IMR-90 (cell line): ENCODE measurements at regions of chr3 and their contacts with region 1.

Region 1: GRCh38 chr3:183317886-183318865 is 65.1 kb downstream of the B3GNT5 start:
- DNase-seq: peak; percentile 24
- ATAC-seq: 0 out of 2 replicates have a peak, but pooled peaks have one; percentile 24
- H3K4me3 ChIP-seq: no peak overlapping the region
- H3K27ac ChIP-seq: no peak overlapping the region
- H3K4me1 ChIP-seq: peaks cover 3% of the 10 kb centered on the region; the same call in 1 of the 2 replicates
- H3K27me3 ChIP-seq: peaks cover 5% of the 10 kb centered on the region
- CTCF ChIP-seq: no peak
- POLR2A ChIP-seq: no peak
- RAD21 ChIP-seq: no peak

Region 2: GRCh38 chr3:182325213-182325941 is 992.8 kb before region 1 on chr3:
- CTCF ChIA-PET with region 1: no interaction called
- POLR2A ChIA-PET with region 1: no interaction called
- dilution Hi-C with region 1: no loop called
- in situ Hi-C with region 1: no loop called
- intact Hi-C with region 1: no loop called
- DNase-seq: no peak
- ATAC-seq: no peak
- H3K4me3 ChIP-seq: no peak overlapping the region
- H3K27ac ChIP-seq: no peak overlapping the region
- H3K4me1 ChIP-seq: no peaks in the 10 kb centered on the region
- H3K27me3 ChIP-seq: no peaks in the 10 kb centered on the region
- CTCF ChIP-seq: no peak
- POLR2A ChIP-seq: no peak
- RAD21 ChIP-seq: no peak

Region 3: GRCh38 chr3:183158551-183159006 is 159.6 kb before region 1 on chr3:
- CTCF ChIA-PET with region 1: no interaction called
- POLR2A ChIA-PET with region 1: no interaction called
- dilution Hi-C with region 1: no loop called
- in situ Hi-C with region 1: no loop called
- intact Hi-C with region 1: no loop called
- DNase-seq: peak; percentile 68
- ATAC-seq: no peak
- H3K4me3 ChIP-seq: no peak overlapping the region
- H3K27ac ChIP-seq: no peak overlapping the region
- H3K4me1 ChIP-seq: no peaks in the 10 kb centered on the region
- H3K27me3 ChIP-seq: peaks cover 36% of the 10 kb centered on the region
- CTCF ChIP-seq: no peak
- POLR2A ChIP-seq: no peak
- RAD21 ChIP-seq: no peak

Region 4: GRCh38 chr3:183349421-183350157 is 31.4 kb after region 1 on chr3:
- CTCF ChIA-PET with region 1: interaction called, 13 read pairs
- POLR2A ChIA-PET with region 1: no interaction called
- dilution Hi-C with region 1: no loop called
- in situ Hi-C with region 1: no loop called
- intact Hi-C with region 1: no loop called
- DNase-seq: no peak
- ATAC-seq: no peak
- H3K4me3 ChIP-seq: no peak overlapping the region
- H3K27ac ChIP-seq: no peak overlapping the region
- H3K4me1 ChIP-seq: no peaks in the 10 kb centered on the region
- H3K27me3 ChIP-seq: peaks cover 8% of the 10 kb centered on the region; the same call in 1 of the 2 replicates
- CTCF ChIP-seq: no peak
- POLR2A ChIP-seq: no peak
- RAD21 ChIP-seq: no peak

Region 5: DNA sequence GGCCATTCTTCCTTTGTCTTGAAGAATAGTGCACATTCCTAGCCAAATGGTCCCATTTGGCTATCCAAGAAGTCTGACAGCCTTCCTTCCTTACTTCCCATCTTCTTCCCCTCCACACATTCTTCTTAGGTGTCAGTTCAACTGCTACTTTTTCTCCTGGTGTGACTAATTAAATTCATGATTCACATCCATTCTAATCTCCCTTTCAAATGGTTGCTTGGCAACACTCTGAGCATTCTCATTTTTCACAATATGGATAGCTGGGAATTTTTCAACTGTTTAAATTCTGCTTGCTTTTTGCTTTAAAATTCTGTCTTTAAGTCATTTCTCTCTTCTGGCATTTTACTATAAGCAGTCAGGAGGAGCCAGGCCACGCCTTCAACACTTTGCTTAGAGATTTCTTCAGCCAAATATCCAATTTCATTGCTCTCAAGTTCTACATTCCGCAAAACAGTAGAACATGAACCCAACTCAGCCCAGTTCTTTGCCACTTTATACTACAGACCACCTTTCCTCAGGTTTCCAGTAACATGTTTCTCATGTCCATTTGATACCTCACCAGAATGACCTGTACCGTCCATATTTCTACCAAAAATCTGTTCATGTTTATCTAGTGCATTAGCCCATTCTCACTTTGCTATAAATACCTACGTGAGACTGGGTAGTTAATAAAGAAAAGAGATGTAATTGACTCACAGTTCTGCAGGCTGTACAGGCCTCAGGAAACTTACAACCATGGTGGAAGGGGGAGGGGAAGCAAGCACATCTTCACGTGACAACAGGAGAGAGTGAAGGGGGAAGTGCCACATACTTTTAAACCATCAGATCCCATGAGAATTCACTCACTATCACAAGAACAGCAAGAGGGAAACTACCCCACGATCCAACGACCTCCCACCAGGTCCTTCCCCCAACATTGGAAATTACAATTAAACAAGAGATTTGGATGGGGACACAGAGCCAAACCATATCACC is 142.2 kb after region 1 on chr3:
- CTCF ChIA-PET with region 1: no interaction called
- POLR2A ChIA-PET with region 1: no interaction called
- dilution Hi-C with region 1: no loop called
- in situ Hi-C with region 1: no loop called
- intact Hi-C with region 1: no loop called
- DNase-seq: no peak
- ATAC-seq: no peak
- H3K4me3 ChIP-seq: no peak overlapping the region
- H3K27ac ChIP-seq: no peak overlapping the region
- H3K4me1 ChIP-seq: no peaks in the 10 kb centered on the region
- H3K27me3 ChIP-seq: peaks cover 2% of the 10 kb centered on the region; the same call in 1 of the 2 replicates
- CTCF ChIP-seq: no peak
- POLR2A ChIP-seq: no peak
- RAD21 ChIP-seq: no peak